ENCODE measurements at regions of chr13 and their contacts with region 1.

Region 1: GRCh38 chr13:26985285-26985878 is 186.2 kb downstream of the USP12 start:
- DNase-seq: peak; percentile 70
- CTCF ChIP-seq: peak; percentile 84

Region 2: DNA sequence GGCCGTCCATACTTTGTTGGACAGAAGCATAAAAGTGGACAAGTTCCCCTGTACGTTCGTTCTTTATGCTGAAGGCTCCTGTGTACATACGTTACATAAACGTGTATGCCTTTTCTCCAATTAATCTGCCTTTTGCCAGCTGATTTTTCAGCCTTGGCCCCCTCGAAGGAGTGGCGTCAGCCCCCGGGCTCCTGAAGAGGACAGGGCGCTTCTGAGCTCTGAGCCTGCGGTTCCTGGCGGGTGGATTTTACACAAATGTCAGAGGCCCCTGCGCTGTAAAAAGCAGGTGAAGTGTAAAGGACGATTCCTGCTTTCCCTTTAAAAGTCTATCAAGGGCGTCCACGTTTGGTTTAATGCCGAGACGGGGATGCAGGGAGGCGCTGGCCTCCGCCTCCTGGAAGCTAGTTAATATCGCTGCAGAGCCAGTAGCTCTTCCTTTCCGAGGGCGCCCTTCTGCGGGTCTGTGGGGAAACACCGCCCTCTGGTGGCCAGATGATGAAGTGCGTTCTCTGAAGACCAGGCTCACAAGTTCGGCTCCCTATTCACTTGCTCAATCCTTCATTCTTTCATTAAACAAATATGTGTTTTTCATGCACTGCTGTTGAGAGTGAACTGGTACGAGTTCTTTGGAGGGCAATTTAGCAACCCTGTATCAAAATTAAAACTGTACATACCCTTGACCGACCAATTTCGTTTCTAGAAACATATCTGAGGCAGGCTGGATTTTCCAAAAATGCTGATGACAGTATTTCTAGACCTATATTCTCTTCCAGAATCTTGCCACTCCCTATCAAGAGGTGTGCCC is 286.8 kb before region 1 on chr13:
- CTCF ChIA-PET with region 1: no interaction called
- POLR2A ChIA-PET with region 1: no interaction called
- DNase-seq: peak; percentile 84
- CTCF ChIP-seq: peak; percentile 82

Region 3: DNA sequence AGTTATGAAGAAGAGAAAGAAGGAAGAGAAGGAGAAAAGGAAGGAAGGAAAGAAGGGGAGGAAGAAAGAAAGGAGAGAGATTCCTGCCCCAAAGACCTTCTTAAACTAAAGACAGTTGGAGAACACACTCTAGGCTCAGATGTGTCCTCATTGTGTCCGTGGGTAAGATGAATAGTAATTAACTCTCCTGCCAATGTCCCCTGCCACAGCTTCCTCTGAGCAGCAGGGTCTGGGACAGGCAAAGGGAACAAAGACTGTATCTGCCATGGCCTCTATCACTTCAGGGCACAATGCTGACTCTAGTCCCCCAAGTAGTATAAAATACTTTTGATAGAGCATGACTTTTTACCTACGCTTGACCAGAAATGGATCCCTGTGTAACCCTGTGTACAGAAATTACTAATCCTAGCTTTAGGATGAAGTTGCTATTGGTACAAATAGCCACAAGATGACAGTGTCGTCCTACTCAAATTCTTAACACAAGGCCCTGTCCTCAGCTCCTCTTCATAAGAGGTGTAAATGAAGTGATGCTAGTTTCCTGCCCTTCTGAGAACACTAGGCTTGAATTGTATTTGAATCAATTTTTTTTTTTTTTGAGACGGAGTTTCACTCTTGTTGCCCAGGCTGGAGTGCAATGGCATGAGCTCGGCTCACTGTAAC is 38.6 kb before region 1 on chr13:
- CTCF ChIA-PET with region 1: interaction called, 22 read pairs
- POLR2A ChIA-PET with region 1: no interaction called
- DNase-seq: peak; percentile 50
- CTCF ChIP-seq: peak; percentile 53

Region 4: DNA sequence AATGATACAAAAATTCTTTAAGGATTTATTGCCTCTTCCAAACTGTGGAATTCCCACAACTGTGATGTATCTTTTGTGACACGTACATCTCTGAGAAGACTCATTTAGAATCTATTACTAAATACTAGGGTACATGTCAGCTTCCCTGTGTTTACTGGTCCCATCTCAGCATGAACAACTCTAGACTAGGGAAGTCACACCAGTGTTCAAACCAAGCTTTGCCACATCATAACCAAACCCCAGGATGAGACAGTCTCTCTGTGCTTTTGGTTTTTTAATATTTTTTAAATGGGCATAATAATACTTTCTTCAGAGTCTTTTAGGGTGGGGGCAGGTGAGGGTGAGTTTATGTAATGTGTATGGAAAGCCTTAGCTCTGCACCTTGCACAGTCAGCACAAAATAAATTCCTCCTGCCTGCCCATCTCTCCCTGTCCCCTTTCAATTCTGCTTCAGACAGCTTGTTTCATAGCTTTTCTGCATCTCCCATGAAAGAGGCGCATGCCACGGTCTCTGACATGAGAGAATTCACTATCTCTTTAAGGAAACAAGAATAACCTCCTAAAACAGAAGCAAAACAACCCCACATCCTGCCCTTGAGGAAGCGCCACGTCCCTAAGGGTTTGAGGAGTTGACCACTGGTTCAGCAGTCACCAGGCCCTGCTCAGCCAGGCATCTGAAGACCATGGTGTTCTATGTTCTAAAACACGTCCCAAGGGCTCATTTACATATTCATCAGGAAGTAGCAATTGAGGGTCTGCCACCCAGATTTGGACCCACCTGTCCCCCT is 11.8 kb after region 1 on chr13:
- CTCF ChIA-PET with region 1: interaction called, 15 read pairs
- POLR2A ChIA-PET with region 1: no interaction called
- DNase-seq: peak; percentile 39
- CTCF ChIP-seq: no peak

Region 5: GRCh38 chr13:27022571-27023311 is 37.4 kb after region 1 on chr13:
- CTCF ChIA-PET with region 1: interaction called, 10 read pairs
- POLR2A ChIA-PET with region 1: no interaction called
- DNase-seq: no peak
- CTCF ChIP-seq: no peak

Region 6: DNA sequence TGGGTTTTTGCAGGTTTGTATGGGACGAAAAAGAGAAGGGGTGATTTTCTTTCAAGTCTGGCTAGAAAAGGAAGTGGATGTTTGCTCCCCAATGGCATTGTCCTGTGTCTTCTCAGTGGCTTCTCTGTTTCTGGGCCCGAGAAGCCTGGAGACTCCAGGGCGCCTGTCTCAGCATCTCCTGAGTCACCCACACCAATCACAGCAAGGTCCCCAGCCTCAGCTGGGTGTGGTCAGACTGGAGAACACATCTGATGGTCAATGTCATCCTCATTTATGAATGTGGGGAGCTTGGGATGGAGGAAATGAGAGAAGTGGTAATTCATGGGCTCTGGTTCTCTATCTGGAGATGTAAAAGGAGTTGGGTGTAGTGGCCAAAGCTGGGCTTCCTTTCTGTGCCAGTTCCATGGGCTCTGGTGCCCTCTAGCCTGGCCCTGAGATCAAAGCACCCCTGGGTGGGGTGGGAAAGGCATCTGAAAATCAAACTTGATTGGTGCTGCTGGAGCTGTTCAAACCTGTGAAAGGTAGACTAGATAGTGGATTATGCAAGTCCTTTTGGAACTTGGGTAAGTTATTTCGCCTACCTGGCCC is 298.6 kb after region 1 on chr13:
- CTCF ChIA-PET with region 1: interaction called, 20 read pairs
- POLR2A ChIA-PET with region 1: no interaction called
- DNase-seq: no peak
- CTCF ChIP-seq: peak; percentile 41

Region 7: GRCh38 chr13:27347211-27347772 is 361.9 kb after region 1 on chr13:
- CTCF ChIA-PET with region 1: interaction called, 75 read pairs
- POLR2A ChIA-PET with region 1: no interaction called
- DNase-seq: no peak
- CTCF ChIP-seq: no peak

Region 8: GRCh38 chr13:27362064-27362883 is 376.9 kb after region 1 on chr13:
- CTCF ChIA-PET with region 1: interaction called, 252 read pairs
- POLR2A ChIA-PET with region 1: no interaction called
- DNase-seq: peak; percentile 88
- CTCF ChIP-seq: peak; percentile 88

Measured in GM10248 (cell line).